Activated CD4-positive, alpha-beta T cell treated with anti-CD3 and anti-CD28 coated beads, Interleukin-2, amount 10 ng/mL, durations not matched to agents 7 days and 5 days (primary cell): ENCODE measurements at regions of chr15 and their contacts with region 1.

Region 1: GRCh38 chr15:31472636-31473384 is 146.2 kb downstream of the KLF13 start:
- DNase-seq: peak; percentile 82
- H3K4me3 Mint-ChIP-seq: peak overlapping the region; percentile 62
- H3K27ac Mint-ChIP-seq: peak overlapping the region; percentile 92
- H3K4me1 Mint-ChIP-seq: peaks cover 43% of the 10 kb centered on the region
- H3K27me3 Mint-ChIP-seq: no peaks in the 10 kb centered on the region

Region 2: DNA sequence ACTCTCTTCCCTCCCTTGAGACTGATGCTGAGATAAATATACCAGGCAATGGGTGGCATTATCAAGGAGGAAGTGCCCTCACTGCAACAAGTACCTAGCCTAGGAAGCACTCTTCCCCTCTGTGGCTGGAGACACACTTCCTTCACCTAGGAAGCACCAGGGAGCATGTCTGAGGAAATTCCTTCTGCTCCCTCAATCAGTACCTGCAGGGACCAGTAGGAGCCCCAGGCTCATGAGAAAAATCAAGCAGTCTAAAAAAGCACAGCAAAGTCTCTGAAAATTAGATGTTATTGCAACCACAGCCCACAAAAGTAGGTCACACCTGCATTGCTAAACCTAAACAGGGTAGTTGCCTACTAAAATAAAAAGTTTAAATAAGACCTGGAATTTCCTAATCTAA is 293.1 kb before region 1 on chr15:
- CTCF ChIA-PET with region 1: no interaction called
- POLR2A ChIA-PET with region 1: no interaction called
- DNase-seq: no peak
- H3K4me3 Mint-ChIP-seq: no peak overlapping the region
- H3K27ac Mint-ChIP-seq: no peak overlapping the region
- H3K4me1 Mint-ChIP-seq: peaks cover 10% of the 10 kb centered on the region
- H3K27me3 Mint-ChIP-seq: no peaks in the 10 kb centered on the region

Region 3: GRCh38 chr15:31446546-31446945 is 26.3 kb before region 1 on chr15:
- CTCF ChIA-PET with region 1: no interaction called
- POLR2A ChIA-PET with region 1: no interaction called
- DNase-seq: no peak
- H3K4me3 Mint-ChIP-seq: no peak overlapping the region
- H3K27ac Mint-ChIP-seq: no peak overlapping the region
- H3K4me1 Mint-ChIP-seq: peaks cover 30% of the 10 kb centered on the region
- H3K27me3 Mint-ChIP-seq: no peaks in the 10 kb centered on the region

Region 4: DNA sequence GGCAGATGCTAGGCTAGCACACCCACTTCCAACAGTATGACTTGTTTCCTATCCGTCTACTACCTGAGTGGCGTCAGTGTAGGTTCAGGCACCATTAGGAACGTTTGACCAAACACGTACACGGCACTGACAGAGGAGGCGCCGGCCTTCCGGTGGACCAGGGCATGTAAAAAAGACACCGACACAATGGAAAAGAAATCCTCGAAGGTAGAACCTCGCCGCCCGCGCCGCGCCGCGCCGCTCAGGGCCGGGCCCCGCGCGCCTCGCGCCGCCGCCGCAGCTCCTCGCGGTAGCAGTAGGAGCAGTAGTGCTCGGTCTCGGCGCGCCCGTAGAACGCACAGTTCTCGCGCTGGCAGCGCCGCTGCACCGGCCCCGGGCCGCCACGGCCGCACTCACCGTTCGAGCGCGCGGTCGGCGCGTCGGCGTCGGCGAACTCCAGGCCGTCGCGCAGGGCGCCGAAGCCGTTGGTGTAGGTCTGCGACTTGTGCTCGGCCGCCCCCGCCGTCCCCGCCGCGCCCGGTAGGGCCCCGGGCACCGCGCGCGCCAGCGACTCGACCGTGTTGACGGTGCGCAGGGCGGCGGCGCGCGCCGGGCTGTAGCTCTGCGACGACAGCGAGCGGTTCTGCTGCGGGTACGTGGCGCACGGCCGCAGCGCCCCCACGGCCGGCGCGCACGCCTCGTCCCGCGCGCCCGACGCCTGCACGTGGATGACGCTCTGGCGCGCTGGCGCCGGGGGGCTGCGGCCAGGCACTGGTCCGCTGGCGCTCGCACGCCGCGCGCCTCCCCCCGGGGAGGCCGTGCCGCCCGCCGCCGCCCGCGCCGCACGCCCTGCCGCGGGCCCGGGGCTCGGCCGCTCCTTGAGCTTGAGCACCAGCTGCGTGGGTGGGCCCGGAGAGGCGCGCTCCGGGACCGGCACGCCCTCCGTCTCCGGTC is 10.5 kb after region 1 on chr15:
- CTCF ChIA-PET with region 1: interaction called, 37 read pairs
- POLR2A ChIA-PET with region 1: no interaction called
- DNase-seq: peak; percentile 58
- H3K4me3 Mint-ChIP-seq: peak overlapping the region; percentile 91
- H3K27ac Mint-ChIP-seq: peak overlapping the region; percentile 93
- H3K4me1 Mint-ChIP-seq: peaks cover 68% of the 10 kb centered on the region
- H3K27me3 Mint-ChIP-seq: peaks cover 2% of the 10 kb centered on the region

Region 5: DNA sequence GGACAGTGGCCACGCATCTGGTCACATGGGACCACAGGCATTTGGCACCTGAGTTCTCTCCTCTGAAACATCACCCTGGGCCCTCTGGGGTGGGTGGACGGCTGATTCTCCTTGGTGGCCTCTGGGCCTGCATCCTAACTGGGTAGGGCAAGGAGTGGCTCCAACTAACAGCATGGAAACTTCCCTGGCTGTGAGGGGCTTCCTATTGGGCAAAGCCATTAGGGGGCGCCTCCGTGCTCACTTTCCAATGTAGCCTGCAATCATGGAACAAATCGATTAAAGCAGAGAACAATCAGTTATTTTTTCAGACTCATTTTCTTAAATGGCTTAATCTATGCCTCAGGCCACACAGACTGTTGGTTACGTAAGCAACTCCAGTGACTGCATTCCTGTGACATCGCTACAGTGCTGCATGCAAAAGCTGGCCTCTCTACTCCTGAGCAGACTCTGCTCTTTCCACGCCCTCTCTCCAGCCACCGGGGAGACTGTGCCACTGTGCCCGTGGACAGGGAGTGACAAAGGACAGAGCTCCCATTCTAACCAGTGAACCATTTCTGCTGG is 132.6 kb after region 1 on chr15:
- CTCF ChIA-PET with region 1: no interaction called
- POLR2A ChIA-PET with region 1: no interaction called
- DNase-seq: no peak
- H3K4me3 Mint-ChIP-seq: no peak overlapping the region
- H3K27ac Mint-ChIP-seq: no peak overlapping the region
- H3K4me1 Mint-ChIP-seq: no peaks in the 10 kb centered on the region
- H3K27me3 Mint-ChIP-seq: peaks cover 38% of the 10 kb centered on the region